ENCODE measurements at regions of chr12 and their contacts with region 1.

Region 1: GRCh38 chr12:57904848-57905811 is 36.2 kb upstream of the ATP23 start:
- DNase-seq: peak; percentile 73 to 85 (median 81)
- H3K4me3 ChIP-seq: no peak overlapping the region
- H3K4me3 Mint-ChIP-seq: peak overlapping the region in 1 of 2 donors; percentile 18
- H3K27ac ChIP-seq: no peak overlapping the region
- H3K27ac Mint-ChIP-seq: no peak overlapping the region
- H3K4me1 ChIP-seq: peaks cover 0 to 4% of the 10 kb centered on the region in 2 donors
- H3K4me1 Mint-ChIP-seq: peaks cover 6% of the 10 kb centered on the region
- H3K27me3 ChIP-seq: no peaks in the 10 kb centered on the region
- H3K27me3 Mint-ChIP-seq: peaks cover 0 to 6% (median 2%) of the 10 kb centered on the region in 3 donors
- CTCF ChIP-seq: peak; percentile 100

Region 2: GRCh38 chr12:57830393-57830792 is 74.7 kb before region 1 on chr12:
- intact Hi-C with region 1: loop called (anchors 1 to 2 kb)
- DNase-seq: no peak
- H3K4me3 ChIP-seq: no peak overlapping the region
- H3K4me3 Mint-ChIP-seq: no peak overlapping the region
- H3K27ac ChIP-seq: no peak overlapping the region
- H3K27ac Mint-ChIP-seq: peak overlapping the region in 2 of 7 donors; percentile 37 to 61
- H3K4me1 ChIP-seq: peaks cover 49 to 56% of the 10 kb centered on the region in 2 donors
- H3K4me1 Mint-ChIP-seq: peaks cover 57% of the 10 kb centered on the region
- H3K27me3 ChIP-seq: no peaks in the 10 kb centered on the region
- H3K27me3 Mint-ChIP-seq: peaks cover 0 to 3% (median 0%) of the 10 kb centered on the region in 3 donors
- CTCF ChIP-seq: no peak

Region 3: DNA sequence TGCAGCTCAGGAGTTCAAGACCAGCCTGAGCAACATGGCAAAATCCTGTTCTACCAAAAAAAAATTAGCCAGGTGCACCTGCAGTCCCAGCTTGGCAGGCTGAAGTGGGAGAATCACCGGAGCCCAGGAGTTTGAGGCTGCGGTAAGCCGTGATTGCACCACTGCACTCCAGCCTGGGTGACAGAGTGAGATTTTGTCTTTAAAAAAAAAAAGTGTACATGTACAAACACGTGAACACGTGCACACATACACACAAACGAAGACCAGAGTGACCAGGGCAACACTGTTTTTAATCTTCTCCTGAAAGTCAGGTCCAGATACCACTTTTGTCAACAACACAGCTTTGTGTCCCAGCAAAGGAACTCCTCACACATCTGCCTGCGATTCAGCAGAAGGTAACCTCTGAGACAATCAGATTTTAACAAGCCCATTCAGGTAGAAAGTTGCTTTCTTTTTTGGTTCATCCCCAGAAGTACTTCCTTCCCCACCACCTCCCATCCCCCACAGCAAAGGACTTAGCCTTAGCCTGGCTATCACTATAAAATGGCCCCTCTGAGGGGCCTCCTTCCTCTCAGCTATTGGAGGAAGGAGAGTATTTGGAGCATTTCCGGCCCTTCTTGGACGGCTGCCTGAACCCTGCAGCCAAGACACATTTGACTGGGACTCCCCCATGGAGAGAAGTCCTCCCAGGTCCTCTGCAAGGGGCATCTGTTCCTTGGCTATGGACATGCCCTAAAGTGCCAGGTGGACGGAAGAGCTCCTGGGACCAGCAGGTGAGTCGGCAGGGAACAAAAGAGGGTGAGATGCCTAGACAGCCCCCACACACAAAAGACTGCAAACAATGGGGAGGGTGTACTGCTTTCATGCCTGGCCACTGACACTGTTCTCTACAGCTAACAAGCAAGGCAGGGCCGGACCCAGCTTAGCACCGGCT is 68.4 kb before region 1 on chr12:
- intact Hi-C with region 1: loop called (anchors 1 to 2 kb)
- DNase-seq: peak in 1 of 3 donors; percentile 29
- H3K4me3 ChIP-seq: peak overlapping the region in 1 of 3 experiments; percentile 57
- H3K4me3 Mint-ChIP-seq: peak overlapping the region; percentile 17 to 80
- H3K27ac ChIP-seq: peak overlapping the region; percentile 54 to 68
- H3K27ac Mint-ChIP-seq: peak overlapping the region; percentile 46 to 87 (median 77)
- H3K4me1 ChIP-seq: peaks cover 90 to 100% of the 10 kb centered on the region in 2 donors
- H3K4me1 Mint-ChIP-seq: peaks cover 97% of the 10 kb centered on the region
- H3K27me3 ChIP-seq: no peaks in the 10 kb centered on the region
- H3K27me3 Mint-ChIP-seq: no peaks in the 10 kb centered on the region
- CTCF ChIP-seq: no peak